ENCODE measurements at regions of chr3 and their contacts with region 1.

Region 1: DNA sequence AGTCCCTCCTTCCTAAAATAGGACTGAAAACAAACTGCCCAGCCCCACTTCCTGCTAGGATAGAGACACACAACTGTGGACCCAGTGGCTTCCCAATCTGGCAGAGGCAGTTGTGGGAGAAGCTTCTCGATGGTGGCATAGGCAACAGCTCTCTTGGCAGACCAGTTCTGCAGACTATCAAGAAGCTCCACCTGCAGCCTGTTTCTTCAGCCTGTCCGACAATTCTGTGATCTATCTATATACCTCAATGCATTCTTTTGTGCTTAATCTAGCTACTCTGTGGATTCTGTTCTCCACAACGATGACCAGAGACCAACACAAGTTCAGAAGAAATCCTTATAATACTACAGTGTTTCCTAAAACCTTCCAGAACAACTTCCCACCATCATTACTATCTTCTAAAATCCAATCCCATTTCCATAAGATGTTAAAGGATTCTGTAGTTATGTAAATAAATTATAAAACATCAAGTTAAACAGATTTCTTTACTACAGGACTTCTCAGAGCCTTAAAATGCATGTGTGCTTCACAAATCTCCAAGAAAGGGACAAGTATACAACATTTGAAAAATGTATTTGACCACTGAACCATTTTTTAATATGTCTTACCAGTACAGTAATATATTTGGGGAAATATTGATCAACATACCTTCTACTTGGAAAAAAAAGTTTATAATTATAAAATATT is 57.7 kb downstream of the IGF2BP2 start:
- DNase-seq: no peak
- ATAC-seq: no peak

Region 2: DNA sequence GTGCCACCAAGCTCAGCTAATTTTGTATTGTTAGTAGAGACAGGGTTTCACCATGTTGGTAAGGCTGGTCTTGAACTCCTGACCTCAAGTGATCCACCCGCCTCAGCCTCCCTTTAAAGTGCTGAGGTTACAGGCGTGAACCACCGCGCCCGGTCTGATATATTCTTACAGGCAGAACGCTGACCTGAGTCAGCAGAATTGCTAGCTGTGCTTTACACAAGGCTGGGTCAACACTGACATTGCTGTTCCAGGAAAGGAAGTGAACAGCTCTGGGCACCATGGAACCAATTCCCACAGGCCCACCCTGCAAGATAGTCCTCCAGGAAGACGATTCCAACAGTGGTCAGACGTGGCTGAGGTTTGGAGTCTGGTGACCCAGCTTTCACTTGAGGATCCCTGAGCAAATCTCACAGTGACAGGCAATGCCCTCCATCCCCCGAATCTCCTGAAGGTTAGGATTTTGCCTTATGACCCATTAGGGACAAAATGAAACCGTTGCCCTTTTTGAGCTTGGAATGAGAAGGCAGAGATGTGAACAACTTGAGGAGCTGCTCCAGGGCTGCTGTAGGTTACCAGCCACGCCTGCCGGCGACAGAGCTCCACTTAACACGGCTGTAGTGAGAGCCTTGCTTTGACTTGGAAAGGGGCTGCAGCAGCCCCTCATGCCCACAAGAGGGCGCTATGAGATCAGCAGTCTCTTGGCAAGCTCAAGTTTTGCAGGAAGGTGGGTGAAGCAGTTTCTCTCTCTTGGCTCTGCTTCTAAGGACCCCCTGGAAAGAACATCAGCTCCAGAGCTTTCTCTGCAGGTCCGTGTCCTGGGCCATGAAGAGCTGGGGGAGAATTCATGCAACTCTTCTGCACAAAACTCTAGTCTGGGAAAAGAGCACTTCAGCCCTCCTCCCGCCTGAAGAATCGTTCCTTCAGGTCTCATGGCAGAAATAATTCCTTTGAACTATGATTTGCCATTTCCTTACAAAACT is 106.9 kb before region 1 on chr3:
- intact Hi-C with region 1: loop called in 1 of 2 experiments (anchors 5 kb)
- DNase-seq: peak; percentile 77
- ATAC-seq: peak; percentile 44 to 57

Region 3: DNA sequence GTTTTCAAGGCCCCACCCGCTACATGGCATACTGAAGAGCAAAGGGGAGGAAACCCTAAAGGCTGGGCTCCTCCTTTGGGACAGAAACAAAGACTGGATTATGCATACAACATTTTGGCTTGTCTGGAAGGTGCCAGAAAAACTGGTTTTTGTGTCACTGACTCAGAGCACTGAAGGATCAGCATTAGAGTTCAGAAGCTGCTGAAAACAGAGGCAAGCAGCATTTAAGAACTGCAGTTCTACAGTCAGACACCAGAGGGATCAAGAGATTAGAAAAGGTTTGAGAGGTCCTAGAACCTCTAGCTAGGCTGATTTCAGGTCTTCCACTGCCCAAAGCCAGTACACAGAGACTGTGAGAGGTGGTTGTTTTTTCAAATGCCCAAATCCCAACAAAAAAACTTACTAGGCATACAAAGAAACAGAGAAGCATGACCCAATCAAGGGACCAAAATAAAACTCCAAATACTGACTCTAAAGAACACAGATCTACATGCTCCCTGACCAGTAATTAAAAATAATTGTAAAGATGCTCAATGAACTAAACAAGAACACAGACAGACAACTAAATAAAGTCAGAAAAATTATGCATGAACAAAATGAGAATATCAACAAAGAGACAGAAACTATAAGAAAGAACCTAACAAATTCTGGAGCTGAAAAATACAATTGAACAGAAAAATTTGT is 89.9 kb before region 1 on chr3:
- intact Hi-C with region 1: loop called in 1 of 2 experiments (anchors 5 kb)
- DNase-seq: no peak
- ATAC-seq: peak in 1 of 2 donors; percentile 59

Measured in left cardiac atrium (tissue), 4 donors.